ENCODE measurements at regions of chr5 and their contacts with region 1.

Region 1: DNA sequence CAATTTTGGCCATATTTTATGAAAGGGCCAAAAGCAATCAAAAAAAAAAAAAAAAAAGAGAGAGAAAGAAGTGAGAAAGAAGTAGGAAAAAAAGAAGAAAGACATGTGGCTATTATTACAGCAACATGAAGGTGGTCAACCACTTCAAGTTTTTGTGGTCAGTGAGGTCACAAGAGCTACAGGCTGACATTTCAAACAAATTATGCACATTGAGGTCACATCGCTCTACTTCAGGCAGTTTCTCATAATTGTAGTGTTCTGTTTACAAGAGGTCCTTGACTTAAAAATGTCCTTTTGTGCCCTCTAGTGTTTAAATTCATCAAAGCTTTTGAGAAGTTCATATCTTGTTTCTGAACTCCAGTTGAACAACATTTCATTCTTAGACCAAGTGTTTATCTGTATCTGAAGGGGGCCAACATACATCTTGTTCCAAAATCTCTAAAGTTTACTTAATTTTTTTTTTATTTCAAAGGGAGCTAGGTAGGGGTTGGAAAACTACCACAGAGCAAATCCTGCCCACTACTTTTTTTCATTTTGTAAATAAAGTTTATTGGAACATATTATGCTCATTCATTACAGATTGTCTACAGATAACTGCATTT is 513.1 kb downstream of the PDE4D start:
- DNase-seq: no peak
- H3K4me3 ChIP-seq: no peak overlapping the region
- H3K27ac ChIP-seq: no peak overlapping the region
- H3K4me1 ChIP-seq: no peaks in the 10 kb centered on the region
- H3K27me3 ChIP-seq: no peaks in the 10 kb centered on the region
- CTCF ChIP-seq: peak in 1 of 3 donors; percentile 41
- EP300 ChIP-seq: no peak
- POLR2A ChIP-seq: no peak

Region 2: GRCh38 chr5:59673438-59674058 is 293.1 kb after region 1 on chr5:
- intact Hi-C with region 1: loop called in 1 of 4 experiments (anchors 10 kb)
- DNase-seq: no peak
- H3K4me3 ChIP-seq: no peak overlapping the region
- H3K27ac ChIP-seq: no peak overlapping the region
- H3K4me1 ChIP-seq: no peaks in the 10 kb centered on the region
- H3K27me3 ChIP-seq: no peaks in the 10 kb centered on the region
- CTCF ChIP-seq: peak; percentile 36 to 64 (median 53)
- EP300 ChIP-seq: no peak
- POLR2A ChIP-seq: no peak